ENCODE measurements at regions of chr9 and their contacts with region 1.

Region 1: DNA sequence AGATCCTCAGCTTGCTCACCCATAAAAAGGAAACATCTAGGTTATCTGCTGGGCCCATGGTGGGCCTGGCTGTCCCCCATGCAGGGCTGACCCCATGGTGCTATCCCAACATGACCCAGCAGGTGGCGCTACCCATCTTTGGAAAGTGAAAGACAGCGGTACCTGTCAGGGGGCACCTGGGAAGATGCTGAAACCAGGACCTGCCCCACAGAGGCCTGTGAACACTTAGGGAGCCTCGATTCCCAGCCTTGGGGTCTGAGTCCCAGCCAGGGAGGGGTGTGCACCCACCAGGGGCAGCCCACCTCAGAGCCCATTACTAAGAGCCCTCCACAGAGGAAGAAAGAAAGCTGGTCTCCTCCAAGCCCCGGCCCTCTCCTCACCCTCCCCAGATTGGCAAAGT is 46.6 kb upstream of the IPPK start:
- DNase-seq: peak; percentile 53 to 84 (median 70)
- ATAC-seq: peak; percentile 86
- H3K4me3 ChIP-seq: no peak overlapping the region
- H3K4me3 Mint-ChIP-seq: no peak overlapping the region
- H3K27ac ChIP-seq: no peak overlapping the region
- H3K27ac Mint-ChIP-seq: peak overlapping the region in 5 of 9 donors; percentile 1 to 53 (median 36)
- H3K4me1 ChIP-seq: peaks cover 9 to 14% of the 10 kb centered on the region in 2 donors
- H3K4me1 Mint-ChIP-seq: peaks cover 9 to 21% (median 16%) of the 10 kb centered on the region in 7 donors
- H3K27me3 ChIP-seq: no peaks in the 10 kb centered on the region
- H3K27me3 Mint-ChIP-seq: no peaks in the 10 kb centered on the region

Region 2: DNA sequence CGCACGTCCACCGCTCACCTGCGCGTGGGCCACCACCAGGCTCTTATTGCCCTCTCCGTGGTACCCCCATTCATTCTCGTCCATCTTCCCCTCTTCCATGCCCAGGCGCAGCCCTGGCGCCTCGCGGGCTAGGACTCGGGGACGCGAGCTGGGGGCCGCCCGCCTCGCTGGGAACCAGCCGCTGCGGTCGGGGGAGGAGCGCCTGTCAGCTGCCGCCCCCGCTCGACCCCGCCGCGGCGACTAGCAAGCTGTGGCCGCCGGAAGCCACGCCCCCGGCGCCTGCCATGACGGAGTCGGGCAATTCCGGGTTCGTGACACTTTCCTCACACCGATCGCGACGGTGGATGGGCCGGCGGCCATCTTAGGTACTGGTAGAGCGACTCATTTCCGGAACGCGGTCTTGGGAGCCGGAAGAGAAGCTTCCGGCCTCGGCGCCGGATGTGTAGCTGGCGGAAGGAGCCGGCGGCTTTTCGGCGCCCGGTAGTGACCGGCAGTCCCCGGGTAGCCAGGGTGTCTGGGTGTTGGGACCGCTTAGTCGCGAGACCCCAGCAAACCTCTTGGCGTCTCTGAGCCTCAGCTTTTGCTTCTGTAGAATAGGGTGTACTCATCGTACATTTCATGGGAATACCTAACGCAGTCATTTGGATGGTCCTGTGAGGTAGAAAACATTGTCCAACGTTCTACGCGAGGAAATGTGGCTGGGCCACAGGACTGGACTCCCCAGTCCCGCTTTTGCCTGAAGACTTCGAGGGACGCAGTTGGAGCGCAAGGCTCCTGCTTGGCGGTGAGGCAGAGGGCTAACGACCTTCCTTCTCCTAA is 46.5 kb before region 1 on chr9 and contains the start of gene IPPK:
- CTCF ChIA-PET with region 1: interaction called, 3 read pairs
- POLR2A ChIA-PET with region 1: interaction called, 4 read pairs
- intact Hi-C with region 1: loop called in 1 of 2 experiments (anchors 2 kb)
- DNase-seq: peak; percentile 92 to 99 (median 96)
- ATAC-seq: peak; percentile 98
- H3K4me3 ChIP-seq: peak within 1 kb of the TSS; percentile 100
- H3K4me3 Mint-ChIP-seq: peak within 1 kb of the TSS; percentile 83 to 98 (median 95)
- H3K27ac ChIP-seq: peak within 1 kb of the TSS; percentile 91
- H3K27ac Mint-ChIP-seq: peak within 1 kb of the TSS; percentile 90 to 98 (median 95)
- H3K4me1 ChIP-seq: peaks cover 16 to 23% of the 10 kb centered on the region in 2 donors
- H3K4me1 Mint-ChIP-seq: peaks cover 27 to 46% (median 36%) of the 10 kb centered on the region in 7 donors
- H3K27me3 ChIP-seq: no peaks in the 10 kb centered on the region
- H3K27me3 Mint-ChIP-seq: no peaks in the 10 kb centered on the region
- total RNA-seq, gene IPPK: 5.9 to 12.8 (median 7.4) TPM

Region 3: GRCh38 chr9:92790542-92791527 is 74.3 kb after region 1 on chr9:
- CTCF ChIA-PET with region 1: interaction called, 60 read pairs
- POLR2A ChIA-PET with region 1: interaction called, 3 read pairs
- intact Hi-C with region 1: loop called in 1 of 2 experiments (anchors 1 kb)
- DNase-seq: peak; percentile 53 to 79 (median 70)
- ATAC-seq: peak; percentile 97
- H3K4me3 ChIP-seq: no peak overlapping the region
- H3K4me3 Mint-ChIP-seq: peak overlapping the region in 1 of 10 donors; percentile 4
- H3K27ac ChIP-seq: no peak overlapping the region
- H3K27ac Mint-ChIP-seq: peak overlapping the region in 2 of 9 donors; percentile 37 to 78
- H3K4me1 ChIP-seq: no peaks in the 10 kb centered on the region
- H3K4me1 Mint-ChIP-seq: peaks cover 2 to 11% (median 7%) of the 10 kb centered on the region in 7 donors
- H3K27me3 ChIP-seq: no peaks in the 10 kb centered on the region
- H3K27me3 Mint-ChIP-seq: peaks cover 0 to 13% (median 6%) of the 10 kb centered on the region in 5 donors

Region 4: GRCh38 chr9:92808726-92809451 is 92.3 kb after region 1 on chr9:
- CTCF ChIA-PET with region 1: no interaction called
- POLR2A ChIA-PET with region 1: no interaction called
- intact Hi-C with region 1: loop called in 1 of 2 experiments (anchors 5 kb)
- DNase-seq: peak; percentile 16 to 72 (median 44)
- ATAC-seq: peak; percentile 66
- H3K4me3 ChIP-seq: peak overlapping the region; percentile 57
- H3K4me3 Mint-ChIP-seq: peak overlapping the region; percentile 71 to 89 (median 86)
- H3K27ac ChIP-seq: no peak overlapping the region
- H3K27ac Mint-ChIP-seq: peak overlapping the region in 2 of 9 donors; percentile 36 to 58
- H3K4me1 ChIP-seq: peaks cover 6% of the 10 kb centered on the region in 2 donors
- H3K4me1 Mint-ChIP-seq: peaks cover 7 to 28% (median 10%) of the 10 kb centered on the region in 7 donors
- H3K27me3 ChIP-seq: peaks cover 23 to 36% of the 10 kb centered on the region in 2 donors
- H3K27me3 Mint-ChIP-seq: peaks cover 54 to 64% (median 60%) of the 10 kb centered on the region in 5 donors

Region 5: DNA sequence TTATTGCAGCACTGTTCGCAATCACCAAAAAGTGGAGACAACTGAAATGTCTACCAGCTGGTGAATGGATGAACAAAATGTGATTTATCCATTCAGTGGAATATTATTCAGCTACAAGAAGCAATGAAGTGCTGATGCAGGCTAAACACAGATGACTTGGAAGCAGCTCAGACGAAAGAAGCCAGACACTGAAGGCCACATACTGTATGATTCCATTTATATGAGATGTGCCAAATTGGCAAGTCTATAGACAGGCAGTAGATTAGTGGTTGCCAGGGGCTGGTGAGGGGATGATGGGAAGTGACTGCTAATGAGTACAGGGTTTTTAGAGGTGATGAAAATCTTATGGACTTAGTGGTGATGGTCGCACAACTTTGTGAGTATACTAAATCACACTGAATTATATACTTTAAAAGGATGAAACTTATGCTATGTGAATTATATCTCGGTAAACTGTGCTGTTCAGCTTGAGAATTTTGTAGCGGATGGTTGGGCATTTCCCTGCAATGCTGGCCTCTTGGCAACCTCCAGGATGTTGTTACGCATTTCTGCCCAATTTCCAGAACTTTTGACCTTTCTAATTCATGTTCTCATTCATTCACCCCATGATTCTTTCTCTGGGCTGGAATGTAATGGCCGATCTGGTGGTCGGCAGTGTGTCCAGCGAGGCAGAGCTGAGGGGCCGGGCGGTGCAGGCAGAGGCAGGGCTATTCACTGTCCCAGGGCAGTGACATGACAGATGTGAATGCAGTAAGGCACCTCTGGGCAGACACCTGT is 445.4 kb after region 1 on chr9:
- CTCF ChIA-PET with region 1: no interaction called
- POLR2A ChIA-PET with region 1: no interaction called
- intact Hi-C with region 1: no loop called
- DNase-seq: no peak
- ATAC-seq: no peak
- H3K4me3 ChIP-seq: no peak overlapping the region
- H3K4me3 Mint-ChIP-seq: no peak overlapping the region
- H3K27ac ChIP-seq: no peak overlapping the region
- H3K27ac Mint-ChIP-seq: no peak overlapping the region
- H3K4me1 ChIP-seq: peaks cover 0 to 5% of the 10 kb centered on the region in 2 donors
- H3K4me1 Mint-ChIP-seq: peaks cover 0 to 10% (median 6%) of the 10 kb centered on the region in 7 donors
- H3K27me3 ChIP-seq: no peaks in the 10 kb centered on the region
- H3K27me3 Mint-ChIP-seq: no peaks in the 10 kb centered on the region